ENCODE measurements at regions of chr10 and their contacts with region 1.

Region 1: DNA sequence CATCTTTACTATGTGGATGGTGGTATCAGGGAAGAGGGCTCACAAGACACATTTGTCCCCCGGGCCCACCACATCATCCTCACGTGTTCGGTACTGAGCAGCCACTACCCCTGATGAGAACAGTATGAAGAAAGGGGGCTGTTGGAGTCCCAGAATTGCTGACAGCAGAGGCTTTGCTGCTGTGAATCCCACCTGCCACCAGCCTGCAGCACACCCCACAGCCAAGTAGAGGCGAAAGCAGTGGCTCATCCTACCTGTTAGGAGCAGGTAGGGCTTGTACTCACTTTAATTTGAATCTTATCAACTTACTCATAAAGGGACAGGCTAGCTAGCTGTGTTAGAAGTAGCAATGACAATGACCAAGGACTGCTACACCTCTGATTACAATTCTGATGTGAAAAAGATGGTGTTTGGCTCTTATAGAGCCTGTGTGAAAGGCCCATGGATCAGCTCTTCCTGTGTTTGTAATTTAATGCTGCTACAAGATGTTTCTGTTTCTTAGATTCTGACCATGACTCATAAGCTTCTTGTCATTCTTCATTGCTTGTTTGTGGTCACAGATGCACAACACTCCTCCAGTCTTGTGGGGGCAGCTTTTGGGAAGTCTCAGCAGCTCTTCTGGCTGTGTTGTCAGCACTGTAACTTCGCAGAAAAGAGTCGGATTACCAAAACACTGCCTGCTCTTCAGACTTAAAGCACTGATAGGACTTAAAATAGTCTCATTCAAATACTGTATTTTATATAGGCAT is 9.1 kb upstream of the CSGALNACT2 start:
- DNase-seq: peak; percentile 85
- H3K4me3 Mint-ChIP-seq: peak overlapping the region; percentile 66
- H3K27ac Mint-ChIP-seq: peak overlapping the region; percentile 91
- H3K4me1 Mint-ChIP-seq: peaks cover 60% of the 10 kb centered on the region
- H3K27me3 Mint-ChIP-seq: no peaks in the 10 kb centered on the region

Region 2: GRCh38 chr10:42801135-42801534 is 328.0 kb before region 1 on chr10:
- intact Hi-C with region 1: loop called (anchors 5 kb)
- DNase-seq: no peak
- H3K4me3 Mint-ChIP-seq: no peak overlapping the region
- H3K27ac Mint-ChIP-seq: peak overlapping the region; percentile 73
- H3K4me1 Mint-ChIP-seq: peaks cover 6% of the 10 kb centered on the region
- H3K27me3 Mint-ChIP-seq: no peaks in the 10 kb centered on the region

Region 3: DNA sequence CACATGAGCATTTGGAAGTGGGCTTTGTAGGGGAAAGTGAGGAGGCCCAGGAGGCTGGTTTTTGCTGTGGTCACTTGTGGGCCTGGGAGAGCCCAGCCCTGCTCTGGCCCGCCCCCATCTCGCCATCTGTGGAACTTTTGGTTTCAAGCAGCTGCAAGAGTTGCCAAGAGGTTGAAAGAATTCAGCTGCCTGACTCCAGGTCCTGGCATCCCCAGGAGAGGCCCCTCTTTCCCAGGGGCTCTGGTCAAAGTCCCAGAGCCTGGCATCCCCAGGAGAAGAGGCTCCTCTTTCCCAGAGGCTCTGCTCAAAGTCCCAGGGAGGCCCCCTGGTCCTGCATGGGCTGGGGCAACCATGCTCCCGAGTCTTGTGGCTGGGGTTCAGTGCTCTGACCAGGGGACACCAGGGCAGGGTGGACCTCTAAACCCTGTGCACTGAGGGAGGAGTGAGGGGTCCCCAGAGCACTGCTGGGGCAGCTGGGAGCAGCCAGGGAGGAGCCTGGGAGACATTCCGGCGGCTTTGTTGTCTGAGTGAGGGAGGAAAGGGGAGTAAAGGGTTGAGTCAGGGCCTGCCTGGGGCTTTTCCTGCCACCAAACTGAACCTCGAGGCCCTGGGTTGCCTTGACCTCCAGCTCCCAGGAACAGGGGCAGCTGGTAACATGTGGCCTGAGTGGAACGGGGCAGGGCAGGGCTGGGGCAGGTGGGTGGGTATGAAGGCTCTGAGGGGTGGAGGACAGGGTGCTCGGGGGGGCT is 18.6 kb before region 1 on chr10:
- intact Hi-C with region 1: no loop called
- DNase-seq: no peak
- H3K4me3 Mint-ChIP-seq: no peak overlapping the region
- H3K27ac Mint-ChIP-seq: peak overlapping the region; percentile 48
- H3K4me1 Mint-ChIP-seq: peaks cover 13% of the 10 kb centered on the region
- H3K27me3 Mint-ChIP-seq: no peaks in the 10 kb centered on the region

Region 4: DNA sequence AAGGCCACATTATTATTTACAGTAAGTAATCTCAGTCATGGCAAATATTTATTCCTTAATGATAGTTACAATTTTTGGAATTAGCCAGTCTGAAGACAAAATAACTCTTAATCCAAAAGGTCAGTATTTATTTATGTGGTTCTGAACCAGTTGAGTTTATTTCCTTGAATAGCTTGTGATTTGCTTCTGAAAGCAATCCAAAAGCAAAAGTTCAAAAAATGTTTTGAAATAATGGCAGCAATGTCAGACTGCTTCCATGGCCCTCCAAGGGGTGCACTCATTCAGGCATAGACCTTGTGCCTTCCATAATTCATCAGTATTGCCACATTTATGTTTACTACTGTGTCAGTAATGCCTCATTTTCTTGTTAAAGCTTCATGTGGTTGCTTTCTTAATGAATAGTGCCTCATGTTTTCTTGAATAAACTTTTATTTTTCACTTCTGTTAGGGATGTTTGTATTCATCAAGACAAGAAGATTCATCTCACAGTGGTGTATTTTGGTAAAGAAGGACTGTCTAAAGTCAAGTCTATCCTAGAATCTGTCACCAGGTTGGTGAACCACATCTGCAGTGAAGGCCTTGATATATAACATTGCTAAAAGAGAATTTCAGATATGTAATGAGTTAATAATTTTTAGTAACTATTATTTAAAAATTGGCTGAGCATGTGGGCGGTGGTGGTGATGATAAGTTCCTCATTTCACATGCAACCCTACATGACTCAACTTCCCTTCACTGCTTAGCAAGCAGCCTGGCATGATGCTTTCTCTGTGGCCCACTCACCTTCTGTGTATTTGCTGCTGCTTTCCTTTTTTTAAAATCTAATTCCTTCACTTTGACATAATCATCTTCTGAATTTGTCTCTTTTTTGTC is 31.1 kb after region 1 on chr10:
- intact Hi-C with region 1: loop called (anchors 5 kb)
- DNase-seq: no peak
- H3K4me3 Mint-ChIP-seq: peak overlapping the region; percentile 12
- H3K27ac Mint-ChIP-seq: peak overlapping the region; percentile 91
- H3K4me1 Mint-ChIP-seq: peaks cover 41% of the 10 kb centered on the region
- H3K27me3 Mint-ChIP-seq: no peaks in the 10 kb centered on the region